ENCODE measurements at regions of chr14 and their contacts with region 1.

Region 1: GRCh38 chr14:45267071-45267470 is 14.1 kb upstream of the MIS18BP1 start:
- DNase-seq: no peak
- ATAC-seq: no peak
- H3K4me3 ChIP-seq: no peak overlapping the region
- H3K4me3 Mint-ChIP-seq: no peak overlapping the region
- H3K27ac ChIP-seq: no peak overlapping the region
- H3K27ac Mint-ChIP-seq: peak overlapping the region in 1 of 9 donors; percentile 63
- H3K4me1 ChIP-seq: no peaks in the 10 kb centered on the region
- H3K4me1 Mint-ChIP-seq: no peaks in the 10 kb centered on the region
- H3K27me3 ChIP-seq: no peaks in the 10 kb centered on the region
- H3K27me3 Mint-ChIP-seq: peaks cover 4 to 19% (median 10%) of the 10 kb centered on the region in 5 donors

Region 2: GRCh38 chr14:44854114-44854513 is 413.0 kb before region 1 on chr14:
- CTCF ChIA-PET with region 1: no interaction called
- POLR2A ChIA-PET with region 1: no interaction called
- intact Hi-C with region 1: loop called in 1 of 2 experiments (anchors 5 kb)
- DNase-seq: peak in 1 of 9 donors; percentile 4
- ATAC-seq: no peak
- H3K4me3 ChIP-seq: no peak overlapping the region
- H3K4me3 Mint-ChIP-seq: no peak overlapping the region
- H3K27ac ChIP-seq: no peak overlapping the region
- H3K27ac Mint-ChIP-seq: no peak overlapping the region
- H3K4me1 ChIP-seq: no peaks in the 10 kb centered on the region
- H3K4me1 Mint-ChIP-seq: no peaks in the 10 kb centered on the region
- H3K27me3 ChIP-seq: no peaks in the 10 kb centered on the region
- H3K27me3 Mint-ChIP-seq: peaks cover 0 to 41% (median 37%) of the 10 kb centered on the region in 5 donors

Region 3: GRCh38 chr14:44897045-44897844 is 369.8 kb before region 1 on chr14:
- CTCF ChIA-PET with region 1: no interaction called
- POLR2A ChIA-PET with region 1: no interaction called
- intact Hi-C with region 1: loop called in 1 of 2 experiments (anchors 1 kb)
- DNase-seq: peak; percentile 80 to 98 (median 90)
- ATAC-seq: peak; percentile 99
- H3K4me3 ChIP-seq: peak overlapping the region; percentile 68
- H3K4me3 Mint-ChIP-seq: peak overlapping the region; percentile 80 to 97 (median 94)
- H3K27ac ChIP-seq: peak overlapping the region; percentile 86
- H3K27ac Mint-ChIP-seq: peak overlapping the region; percentile 83 to 98 (median 98)
- H3K4me1 ChIP-seq: peaks cover 13 to 17% of the 10 kb centered on the region in 2 donors
- H3K4me1 Mint-ChIP-seq: peaks cover 6 to 40% (median 27%) of the 10 kb centered on the region in 7 donors
- H3K27me3 ChIP-seq: no peaks in the 10 kb centered on the region
- H3K27me3 Mint-ChIP-seq: no peaks in the 10 kb centered on the region

Region 4: DNA sequence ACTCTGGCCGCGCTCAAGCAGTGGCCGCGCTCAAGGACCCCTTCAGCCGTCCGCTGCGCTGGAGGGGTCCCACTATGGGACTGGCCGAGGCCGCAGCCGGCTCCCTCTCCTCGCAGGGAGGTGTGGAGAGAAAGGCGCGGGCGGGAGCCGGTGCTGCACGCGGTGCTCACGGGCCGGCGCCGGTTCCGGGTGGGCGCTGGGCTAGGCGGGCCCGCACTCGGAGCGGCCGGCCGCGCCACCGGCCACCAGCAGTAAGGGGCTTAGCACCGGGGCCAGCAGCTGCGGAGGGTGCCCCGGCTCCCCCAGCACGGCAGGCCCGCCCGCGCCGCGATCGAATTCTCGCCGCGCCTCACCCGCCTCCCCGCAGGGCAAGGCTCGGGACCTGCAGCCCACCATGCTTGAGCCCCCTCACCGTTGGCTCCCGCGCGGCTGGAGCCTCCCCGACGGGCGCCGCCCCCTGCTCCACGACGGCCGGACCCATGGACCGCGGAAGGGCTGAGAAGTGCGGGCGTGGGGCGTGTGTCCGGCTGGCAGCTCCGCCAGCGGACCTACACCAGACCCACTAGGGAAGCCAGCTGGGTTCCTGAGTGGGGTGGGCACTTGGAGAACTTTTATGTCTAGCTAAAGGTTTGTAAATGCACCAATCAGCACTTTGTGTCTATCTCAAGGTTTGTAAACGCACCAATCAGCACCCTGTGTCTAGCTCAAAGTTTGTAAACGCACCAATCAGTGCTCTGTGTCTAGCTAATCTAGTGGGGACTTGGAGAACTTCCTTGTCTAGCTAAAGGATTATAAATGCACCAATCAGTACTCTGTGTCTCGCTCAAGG is 354.8 kb before region 1 on chr14:
- CTCF ChIA-PET with region 1: interaction called, 7 read pairs
- POLR2A ChIA-PET with region 1: no interaction called
- intact Hi-C with region 1: loop called in 1 of 2 experiments (anchors 1 kb)
- DNase-seq: peak in 1 of 9 donors; percentile 10
- ATAC-seq: no peak
- H3K4me3 ChIP-seq: no peak overlapping the region
- H3K4me3 Mint-ChIP-seq: peak overlapping the region in 9 of 10 donors; percentile 26 to 72 (median 52)
- H3K27ac ChIP-seq: no peak overlapping the region
- H3K27ac Mint-ChIP-seq: no peak overlapping the region
- H3K4me1 ChIP-seq: no peaks in the 10 kb centered on the region
- H3K4me1 Mint-ChIP-seq: peaks cover 0 to 16% (median 12%) of the 10 kb centered on the region in 7 donors
- H3K27me3 ChIP-seq: peaks cover 9 to 16% of the 10 kb centered on the region in 2 donors
- H3K27me3 Mint-ChIP-seq: peaks cover 31 to 42% (median 38%) of the 10 kb centered on the region in 5 donors

Region 5: GRCh38 chr14:45156060-45156459 is 111.0 kb before region 1 on chr14:
- CTCF ChIA-PET with region 1: no interaction called
- POLR2A ChIA-PET with region 1: no interaction called
- intact Hi-C with region 1: loop called in 1 of 2 experiments (anchors 1 kb)
- DNase-seq: no peak
- ATAC-seq: no peak
- H3K4me3 ChIP-seq: no peak overlapping the region
- H3K4me3 Mint-ChIP-seq: no peak overlapping the region
- H3K27ac ChIP-seq: no peak overlapping the region
- H3K27ac Mint-ChIP-seq: no peak overlapping the region
- H3K4me1 ChIP-seq: no peaks in the 10 kb centered on the region
- H3K4me1 Mint-ChIP-seq: peaks cover 0 to 6% (median 0%) of the 10 kb centered on the region in 7 donors
- H3K27me3 ChIP-seq: no peaks in the 10 kb centered on the region
- H3K27me3 Mint-ChIP-seq: no peaks in the 10 kb centered on the region

Region 6: DNA sequence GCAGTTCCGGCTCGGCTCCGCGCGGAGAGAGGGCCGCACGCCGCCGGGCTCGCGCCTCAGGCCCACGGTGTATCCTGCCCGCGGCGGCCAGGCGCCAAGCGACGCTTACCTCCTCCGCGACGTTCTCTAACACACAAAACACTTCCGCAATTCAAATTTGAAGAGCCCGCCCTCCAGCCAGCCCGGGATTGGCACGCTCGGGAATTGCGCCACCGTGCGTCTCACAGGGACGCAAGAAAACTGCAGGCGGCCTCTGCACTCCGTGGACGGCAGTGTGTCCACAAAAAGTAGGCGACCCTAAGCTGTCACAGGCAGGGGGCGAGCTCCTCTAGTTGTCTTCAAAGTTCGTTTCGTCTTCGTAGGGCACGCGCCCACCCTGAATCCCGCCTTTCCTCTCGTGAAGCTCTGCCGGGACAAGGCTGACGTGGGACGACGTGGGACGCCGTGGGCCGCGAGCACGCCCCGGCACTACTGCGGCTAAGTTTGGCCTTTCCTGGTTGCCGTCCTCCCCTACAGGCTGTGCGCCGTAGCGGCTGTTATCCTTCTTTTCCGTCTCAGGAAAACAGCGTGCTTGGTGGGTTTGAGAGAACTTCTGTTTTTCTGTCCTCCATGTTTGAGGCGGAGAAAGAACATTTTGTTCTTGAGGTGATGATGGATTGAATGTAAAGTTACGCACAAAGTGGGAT is 13.9 kb before region 1 on chr14 and contains the start of gene MIS18BP1:
- CTCF ChIA-PET with region 1: interaction called, 3 read pairs
- POLR2A ChIA-PET with region 1: no interaction called
- intact Hi-C with region 1: loop called (anchors 1 kb)
- DNase-seq: peak; percentile 83 to 95 (median 91)
- ATAC-seq: peak; percentile 94
- H3K4me3 ChIP-seq: peak within 1 kb of the TSS; percentile 78
- H3K4me3 Mint-ChIP-seq: peak within 1 kb of the TSS; percentile 89 to 97 (median 95)
- H3K27ac ChIP-seq: peak within 1 kb of the TSS; percentile 75
- H3K27ac Mint-ChIP-seq: peak within 1 kb of the TSS; percentile 92 to 97 (median 95)
- H3K4me1 ChIP-seq: peaks cover 0 to 13% of the 10 kb centered on the region in 2 donors
- H3K4me1 Mint-ChIP-seq: peaks cover 5 to 31% (median 20%) of the 10 kb centered on the region in 7 donors
- H3K27me3 ChIP-seq: no peaks in the 10 kb centered on the region
- H3K27me3 Mint-ChIP-seq: peaks cover 0 to 6% (median 0%) of the 10 kb centered on the region in 5 donors
- total RNA-seq, gene MIS18BP1: 15.6 to 64.9 (median 29.4) TPM

Region 7: DNA sequence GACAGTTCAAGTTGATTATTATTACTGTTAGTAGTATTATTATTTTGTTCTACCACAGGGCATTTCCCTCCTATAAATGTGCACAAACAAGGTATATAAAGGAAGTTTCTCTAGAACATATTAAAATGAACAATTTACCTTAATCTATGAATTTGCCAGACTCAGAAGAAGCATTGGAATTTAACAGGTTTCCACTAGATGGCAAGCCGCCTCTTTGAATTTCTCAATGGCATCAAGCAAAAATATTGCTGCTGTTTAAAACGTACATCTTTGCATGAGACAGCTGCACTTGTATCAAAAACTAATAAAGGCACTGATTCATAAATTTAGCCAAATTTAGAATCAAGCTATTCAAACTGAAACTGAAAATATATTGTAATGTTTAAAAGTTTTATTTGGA is 20.5 kb after region 1 on chr14:
- CTCF ChIA-PET with region 1: no interaction called
- POLR2A ChIA-PET with region 1: no interaction called
- intact Hi-C with region 1: no loop called
- DNase-seq: no peak
- ATAC-seq: no peak
- H3K4me3 ChIP-seq: no peak overlapping the region
- H3K4me3 Mint-ChIP-seq: no peak overlapping the region
- H3K27ac ChIP-seq: no peak overlapping the region
- H3K27ac Mint-ChIP-seq: no peak overlapping the region
- H3K4me1 ChIP-seq: no peaks in the 10 kb centered on the region
- H3K4me1 Mint-ChIP-seq: peaks cover 0 to 9% (median 0%) of the 10 kb centered on the region in 7 donors
- H3K27me3 ChIP-seq: no peaks in the 10 kb centered on the region
- H3K27me3 Mint-ChIP-seq: peaks cover 0 to 22% (median 11%) of the 10 kb centered on the region in 5 donors

Region 8: GRCh38 chr14:45968037-45968436 is 701.0 kb after region 1 on chr14:
- CTCF ChIA-PET with region 1: no interaction called
- POLR2A ChIA-PET with region 1: no interaction called
- intact Hi-C with region 1: no loop called
- DNase-seq: no peak
- ATAC-seq: no peak
- H3K4me3 ChIP-seq: no peak overlapping the region
- H3K4me3 Mint-ChIP-seq: no peak overlapping the region
- H3K27ac ChIP-seq: no peak overlapping the region
- H3K27ac Mint-ChIP-seq: no peak overlapping the region
- H3K4me1 ChIP-seq: no peaks in the 10 kb centered on the region
- H3K4me1 Mint-ChIP-seq: no peaks in the 10 kb centered on the region
- H3K27me3 ChIP-seq: no peaks in the 10 kb centered on the region
- H3K27me3 Mint-ChIP-seq: no peaks in the 10 kb centered on the region